Pancreas (tissue), 10 donors: ENCODE measurements at regions of chr2 and their contacts with region 1.

Region 1: GRCh38 chr2:55049043-55049793 is 1.0 kb downstream of the RTN4 start:
- DNase-seq: peak; percentile 82 to 90 (median 86)
- ATAC-seq: peak; percentile 51 to 75 (median 69)
- H3K4me3 ChIP-seq: peak overlapping the region; percentile 89 to 96 (median 93)
- H3K27ac ChIP-seq: peak overlapping the region; percentile 87 to 98 (median 93)
- H3K4me1 ChIP-seq: peaks cover 16 to 46% (median 45%) of the 10 kb centered on the region in 3 donors
- H3K27me3 ChIP-seq: no peaks in the 10 kb centered on the region
- CTCF ChIP-seq: peak; percentile 19 to 47 (median 34)

Region 2: GRCh38 chr2:54899576-54900200 is 149.5 kb before region 1 on chr2:
- intact Hi-C with region 1: loop called in 1 of 3 experiments (anchors 10 kb)
- DNase-seq: peak in 2 of 6 donors; percentile 19 to 34
- ATAC-seq: peak; percentile 73 to 90 (median 88)
- H3K4me3 ChIP-seq: no peak overlapping the region
- H3K27ac ChIP-seq: no peak overlapping the region
- H3K4me1 ChIP-seq: no peaks in the 10 kb centered on the region
- H3K27me3 ChIP-seq: no peaks in the 10 kb centered on the region
- CTCF ChIP-seq: peak in 3 of 4 donors; percentile 38 to 51 (median 41)